Esophagus muscularis mucosa (tissue), 4 donors: ENCODE measurements at regions of chr6 and their contacts with region 1.

Region 1: DNA sequence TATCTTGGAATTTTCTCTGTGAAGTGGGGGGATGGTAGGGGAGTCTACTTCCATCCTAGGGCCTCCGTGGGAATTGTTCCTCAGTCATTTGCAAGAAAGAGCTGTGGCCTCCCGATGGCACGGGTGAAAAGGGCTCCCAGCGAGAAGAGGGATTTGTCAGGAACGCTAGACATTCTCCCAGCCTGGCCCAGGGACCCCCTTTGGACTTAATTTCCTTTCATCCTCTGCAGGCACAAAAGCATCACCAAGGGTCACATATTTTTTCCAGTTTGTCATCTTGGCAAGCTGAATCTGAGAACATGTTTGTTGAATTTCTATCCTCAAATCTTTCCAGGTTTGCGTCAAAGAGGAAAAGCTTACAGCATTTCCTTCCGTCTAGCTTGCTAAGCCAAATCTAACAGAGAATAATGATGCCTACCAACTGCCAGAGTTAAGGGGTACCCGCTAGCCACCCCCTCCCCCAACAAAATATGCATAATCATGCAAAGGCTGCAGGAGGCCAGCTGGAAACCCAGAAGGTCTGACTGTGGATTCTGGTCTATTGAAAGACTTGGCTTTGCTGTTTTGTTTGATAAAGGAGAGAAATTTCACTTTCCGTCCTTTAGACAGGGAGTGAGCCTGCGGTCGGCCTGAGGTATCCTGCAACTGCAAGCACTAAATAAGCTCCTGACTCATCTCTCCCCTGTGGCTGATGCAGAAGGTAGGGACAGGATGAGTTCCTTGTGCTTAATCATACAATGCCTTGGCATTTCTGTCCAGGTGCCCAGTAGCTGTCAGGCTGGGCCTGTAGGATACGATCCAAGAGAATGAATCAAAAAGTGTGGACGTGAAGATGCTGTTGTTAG is 23.1 kb downstream of the PSMG4 start:
- DNase-seq: no peak
- H3K4me3 ChIP-seq: peak overlapping the region in 1 of 4 donors; percentile 16
- H3K27ac ChIP-seq: peak overlapping the region; percentile 51 to 68 (median 63)
- H3K4me1 ChIP-seq: peaks cover 21 to 41% (median 32%) of the 10 kb centered on the region in 4 donors
- H3K27me3 ChIP-seq: no peaks in the 10 kb centered on the region
- CTCF ChIP-seq: no peak
- EP300 ChIP-seq: no peak
- POLR2A ChIP-seq: no peak

Region 2: GRCh38 chr6:3356056-3356761 is 74.4 kb after region 1 on chr6:
- intact Hi-C with region 1: loop called (anchors 5 kb)
- DNase-seq: peak; percentile 97
- H3K4me3 ChIP-seq: peak overlapping the region; percentile 48 to 56 (median 49)
- H3K27ac ChIP-seq: peak overlapping the region; percentile 87 to 96 (median 94)
- H3K4me1 ChIP-seq: peaks cover 27 to 54% (median 39%) of the 10 kb centered on the region in 4 donors
- H3K27me3 ChIP-seq: no peaks in the 10 kb centered on the region
- CTCF ChIP-seq: no peak
- EP300 ChIP-seq: no peak
- POLR2A ChIP-seq: no peak

Region 3: DNA sequence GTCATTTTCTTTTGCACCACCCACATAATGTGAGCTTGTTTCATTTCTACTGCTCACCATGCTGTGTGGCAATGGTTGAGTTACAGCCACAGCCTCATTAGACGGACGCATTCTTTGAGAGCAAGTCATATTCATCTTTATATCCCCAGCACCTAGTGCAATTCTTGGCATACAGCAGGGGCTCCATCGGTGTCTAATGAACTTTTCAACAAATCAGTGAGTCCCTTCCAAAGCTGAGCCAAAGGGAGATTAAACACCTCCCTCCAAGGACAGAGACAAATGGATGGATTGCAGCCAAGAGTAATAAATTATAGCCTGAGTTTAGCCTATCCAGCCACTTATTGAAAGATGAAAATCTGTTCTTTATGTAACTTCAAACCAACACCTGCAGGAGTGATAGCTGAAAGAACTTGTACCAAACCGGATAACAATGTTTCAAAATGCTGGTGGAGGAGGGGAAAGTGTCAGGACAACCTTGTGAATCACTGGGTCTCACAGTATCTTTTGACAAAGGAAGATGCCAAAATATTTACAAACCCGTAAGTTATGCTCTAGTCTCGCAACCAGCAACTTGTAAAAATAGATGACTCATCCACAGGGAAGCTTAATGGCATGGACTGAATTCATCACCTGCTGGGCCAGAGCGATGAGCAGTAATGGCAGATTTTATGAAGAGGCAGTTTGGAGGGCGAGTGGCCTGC is 330.6 kb after region 1 on chr6:
- intact Hi-C with region 1: loop called (anchors 10 kb)
- DNase-seq: peak; percentile 90
- H3K4me3 ChIP-seq: no peak overlapping the region
- H3K27ac ChIP-seq: peak overlapping the region; percentile 26 to 70 (median 47)
- H3K4me1 ChIP-seq: peaks cover 0 to 24% (median 18%) of the 10 kb centered on the region in 4 donors
- H3K27me3 ChIP-seq: no peaks in the 10 kb centered on the region
- CTCF ChIP-seq: no peak
- EP300 ChIP-seq: no peak
- POLR2A ChIP-seq: no peak

Region 4: DNA sequence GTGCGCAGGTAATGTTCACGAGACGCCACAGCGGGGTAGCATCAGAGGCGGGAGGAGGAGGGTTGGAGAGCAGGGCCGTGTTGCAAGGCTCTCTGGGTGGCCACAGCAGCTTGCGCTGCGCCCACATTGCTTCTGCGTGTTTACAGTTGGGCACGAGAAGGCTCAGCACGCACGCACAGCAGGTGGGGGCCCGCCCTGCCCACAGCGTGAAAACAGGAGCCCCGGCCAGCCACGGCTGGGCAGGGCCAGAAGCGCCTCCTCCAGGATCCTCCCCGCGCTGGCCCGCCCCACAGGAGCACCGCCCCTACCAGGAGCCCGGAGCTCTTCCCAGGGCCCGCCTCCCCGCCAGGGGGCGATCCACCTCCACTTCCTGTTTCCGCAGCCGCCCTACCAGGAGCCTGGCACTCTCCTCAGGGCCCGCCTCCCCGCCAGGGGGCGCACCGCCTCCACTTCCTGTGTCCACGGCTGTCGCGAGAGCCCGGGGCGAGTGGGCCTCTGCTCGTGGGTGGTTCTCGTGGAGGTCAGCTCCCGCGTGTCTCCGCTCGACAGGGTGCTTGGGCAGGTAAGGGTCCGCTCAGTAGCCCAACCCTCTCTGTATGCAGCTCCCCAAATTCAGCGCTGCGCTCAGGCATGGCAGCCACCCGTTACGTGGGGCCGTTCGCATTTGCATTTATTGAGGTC is 567.2 kb after region 1 on chr6 and contains the start of gene FAM50B:
- intact Hi-C with region 1: loop called (anchors 10 kb)
- DNase-seq: peak; percentile 97
- H3K4me3 ChIP-seq: peak within 1 kb of the TSS; percentile 55 to 64 (median 56)
- H3K27ac ChIP-seq: peak within 1 kb of the TSS; percentile 70 to 83 (median 74)
- H3K4me1 ChIP-seq: peaks cover 0 to 24% (median 22%) of the 10 kb centered on the region in 4 donors
- H3K27me3 ChIP-seq: no peaks in the 10 kb centered on the region
- CTCF ChIP-seq: peak; percentile 94 to 97 (median 97)
- EP300 ChIP-seq: no peak
- POLR2A ChIP-seq: no peak
- total RNA-seq, gene FAM50B: 12.5 to 26.6 (median 17.6) TPM

Region 5: DNA sequence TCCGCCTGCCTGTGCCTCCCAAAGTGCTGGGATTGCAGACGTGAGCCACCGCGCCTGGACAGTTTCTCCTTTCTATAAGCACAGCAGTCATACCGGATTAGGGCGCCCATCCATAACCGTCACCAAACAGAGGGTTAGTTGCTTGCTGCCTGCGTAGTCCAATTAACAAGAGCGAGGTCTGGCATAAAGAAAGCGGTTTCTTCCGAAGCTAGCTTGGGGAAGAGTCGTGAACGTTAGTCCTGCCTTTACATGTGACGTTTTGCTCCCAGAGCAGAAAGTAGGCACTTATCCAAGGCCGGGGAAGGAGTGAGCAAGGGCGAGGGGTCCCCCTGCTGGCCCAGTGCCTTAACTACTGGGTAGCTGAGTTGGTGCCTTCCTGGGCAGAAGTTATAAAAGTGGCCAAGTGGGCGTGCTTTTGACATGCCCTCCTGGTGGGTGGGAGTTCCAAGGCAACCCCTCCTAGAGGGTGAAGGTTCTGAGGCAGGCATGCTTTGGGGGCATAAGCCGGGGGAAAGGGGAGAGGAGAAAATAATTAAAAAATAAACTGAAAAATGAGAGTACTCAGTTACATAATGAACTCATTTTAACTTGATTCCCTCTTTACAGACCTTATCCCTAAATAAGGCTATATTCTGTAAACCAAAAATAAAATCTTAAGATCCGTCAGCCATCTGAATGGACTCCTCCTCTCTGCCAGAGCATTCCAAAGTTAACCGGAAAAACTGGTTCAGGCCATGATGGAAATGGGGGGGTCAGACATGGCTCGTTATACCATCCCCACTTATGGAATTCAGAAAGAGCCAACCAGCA is 709.0 kb after region 1 on chr6:
- intact Hi-C with region 1: loop called (anchors 5 kb)
- DNase-seq: peak; percentile 96
- H3K4me3 ChIP-seq: peak overlapping the region; percentile 46 to 58 (median 52)
- H3K27ac ChIP-seq: peak overlapping the region; percentile 72 to 80 (median 78)
- H3K4me1 ChIP-seq: peaks cover 9 to 21% (median 18%) of the 10 kb centered on the region in 4 donors
- H3K27me3 ChIP-seq: no peaks in the 10 kb centered on the region
- CTCF ChIP-seq: peak; percentile 80 to 83 (median 81)
- EP300 ChIP-seq: no peak
- POLR2A ChIP-seq: no peak